GM10248 (cell line): ENCODE measurements at regions of chr1 and their contacts with region 1.

Region 1: GRCh38 chr1:26169669-26170471 is at the start of gene ZNF593:
- DNase-seq: peak; percentile 100
- CTCF ChIP-seq: peak; percentile 95

Region 2: DNA sequence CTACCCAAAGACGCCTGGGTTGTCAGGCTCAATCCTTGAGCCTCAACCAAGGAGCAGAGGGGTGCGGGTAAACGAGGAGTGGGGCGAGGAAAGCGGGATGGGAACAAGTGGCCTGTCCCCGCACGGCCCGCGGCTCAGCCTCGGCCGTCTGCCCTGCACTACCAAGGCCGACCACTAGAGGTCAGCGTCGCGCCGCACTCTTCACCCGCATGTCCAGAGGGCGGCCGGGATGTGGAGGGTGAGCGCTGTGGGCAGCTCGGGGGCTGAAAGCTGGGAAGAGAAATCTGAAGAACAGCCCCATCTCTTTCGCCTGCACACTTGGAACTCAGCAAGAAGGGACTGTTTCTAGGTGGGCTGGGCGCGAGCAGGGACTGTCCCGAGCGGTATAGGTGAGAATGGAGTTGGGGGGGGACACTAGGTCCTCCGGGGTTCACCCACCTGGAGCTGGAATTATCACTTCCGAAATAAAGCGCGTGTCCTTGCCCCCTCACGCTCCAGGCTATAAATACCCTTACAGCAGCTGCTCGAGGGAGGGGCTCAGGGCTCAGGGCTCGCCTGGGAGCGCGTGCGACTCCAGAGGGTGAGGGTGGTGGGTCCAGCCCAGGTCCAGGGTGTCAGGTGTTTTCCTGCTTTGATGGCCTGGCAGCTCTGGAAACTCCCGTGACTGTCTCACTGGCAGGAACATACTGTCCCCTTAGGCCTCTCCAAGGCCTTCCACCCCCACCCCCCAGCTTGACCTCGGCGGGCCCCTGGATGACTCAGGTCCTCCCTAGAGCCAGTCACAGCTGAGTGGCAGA is 133.7 kb before region 1 on chr1:
- CTCF ChIA-PET with region 1: interaction called, 23 read pairs
- POLR2A ChIA-PET with region 1: no interaction called
- DNase-seq: peak; percentile 92
- CTCF ChIP-seq: peak; percentile 99

Region 3: DNA sequence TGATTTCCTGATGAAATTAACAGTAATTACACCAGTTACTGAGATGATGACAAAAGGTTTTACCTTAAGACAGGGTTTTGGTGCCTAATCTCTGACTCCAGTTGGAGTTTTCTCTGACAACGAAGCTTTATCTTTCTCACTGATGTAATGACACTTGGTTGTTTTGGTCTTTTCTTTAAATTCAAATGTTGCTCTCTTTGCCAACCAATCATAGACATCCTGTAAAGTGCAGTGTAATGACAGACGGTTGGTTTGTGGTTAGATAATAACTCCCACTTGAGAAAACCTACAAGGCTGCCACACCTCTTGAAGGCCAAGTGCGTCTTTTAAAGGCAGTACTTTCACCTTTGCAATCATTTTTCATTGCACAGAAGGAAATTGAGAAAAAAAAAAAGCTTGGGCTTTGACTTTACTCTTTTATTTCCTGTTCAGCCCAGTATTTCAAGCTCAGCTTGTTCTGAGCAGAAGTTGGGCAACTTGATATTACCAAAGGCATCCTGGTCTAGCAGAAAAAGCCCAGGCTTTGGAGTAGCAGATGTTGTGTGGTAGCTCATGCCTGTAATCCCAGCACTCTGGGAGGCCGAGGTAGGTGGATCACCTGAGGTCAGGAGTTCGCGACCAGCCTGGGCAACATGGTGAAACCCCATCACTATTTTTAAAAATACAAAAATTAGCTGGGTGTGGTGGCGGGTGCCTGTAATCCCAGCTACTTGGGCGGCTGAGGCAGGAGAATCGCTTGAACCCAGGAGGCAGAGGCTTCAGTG is 43.4 kb before region 1 on chr1:
- CTCF ChIA-PET with region 1: interaction called, 14 read pairs
- POLR2A ChIA-PET with region 1: no interaction called
- DNase-seq: peak; percentile 74
- CTCF ChIP-seq: no peak

Region 4: GRCh38 chr1:26156704-26157038 is 13.2 kb before region 1 on chr1:
- CTCF ChIA-PET with region 1: interaction called, 19 read pairs
- POLR2A ChIA-PET with region 1: no interaction called
- DNase-seq: no peak
- CTCF ChIP-seq: no peak

Region 5: DNA sequence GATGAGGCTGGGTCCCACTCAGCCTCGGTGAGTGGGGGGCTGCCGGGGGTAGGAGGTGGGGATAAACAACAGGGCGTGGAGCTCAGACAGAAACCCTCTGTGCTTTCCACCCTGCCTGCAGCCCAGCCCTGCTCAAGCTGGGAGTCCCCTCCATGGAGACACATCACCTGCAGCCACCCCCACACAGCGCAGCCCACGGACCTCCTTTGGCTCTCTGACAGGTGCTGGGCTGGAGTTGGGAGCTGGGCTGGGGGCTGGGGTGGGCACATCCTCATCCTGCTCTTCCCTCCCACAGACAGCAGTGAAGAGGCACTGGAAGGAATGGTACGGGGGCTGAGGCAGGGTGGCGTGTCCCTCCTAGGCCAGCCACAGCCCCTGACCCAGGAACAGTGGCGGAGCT is 18.6 kb after region 1 on chr1:
- CTCF ChIA-PET with region 1: interaction called, 11 read pairs
- POLR2A ChIA-PET with region 1: no interaction called
- DNase-seq: no peak
- CTCF ChIP-seq: no peak